H1 (cell line): ENCODE measurements at regions of chr9 and their contacts with region 1.

Region 1: DNA sequence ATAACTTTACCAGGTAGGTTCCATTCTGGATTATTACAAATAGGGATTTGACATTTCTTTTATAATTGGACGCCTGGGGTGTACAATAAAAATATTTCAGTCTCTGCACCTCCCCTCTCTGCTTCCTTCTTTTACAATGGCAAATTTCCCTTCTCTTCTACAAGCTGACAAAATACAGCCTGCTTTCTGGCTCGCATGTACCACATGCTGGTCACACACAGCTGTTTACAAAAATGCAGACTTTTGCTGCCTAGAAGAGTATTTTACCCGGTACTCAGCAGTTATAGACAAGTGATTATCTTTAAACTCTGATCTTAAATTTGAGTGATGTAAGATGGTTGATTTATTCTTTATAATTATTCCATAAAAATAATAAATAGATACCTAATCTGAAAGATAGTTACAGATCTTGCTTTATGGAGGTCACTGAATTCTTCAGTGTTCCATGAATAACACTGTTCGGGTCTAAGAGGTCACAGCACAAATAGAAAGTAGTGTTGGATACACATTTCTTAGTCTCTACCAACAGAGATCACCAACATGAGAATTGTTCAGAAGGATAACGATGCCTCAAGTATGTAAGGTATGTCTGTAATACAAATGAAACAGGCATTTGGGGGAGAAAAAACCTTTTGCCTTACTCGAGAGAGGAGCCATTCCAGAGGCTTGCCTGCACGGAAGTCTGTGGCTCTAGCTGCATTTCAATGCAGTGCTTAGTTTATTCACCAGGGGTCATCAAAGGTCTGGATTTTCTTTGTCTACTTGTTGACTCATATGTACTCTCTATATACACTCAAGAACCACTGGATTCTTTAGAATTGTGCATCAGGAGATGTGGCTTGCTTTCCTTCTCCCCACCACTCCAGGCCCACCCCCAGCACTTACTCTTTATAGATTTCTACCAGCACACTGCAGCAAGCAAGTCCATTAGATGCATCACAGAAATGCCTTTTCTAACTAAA is 206.6 kb upstream of the RFX3 start:
- DNase-seq: peak in 1 of 2 experiments; percentile 25
- H3K4me3 ChIP-seq: no peak overlapping the region
- H3K27ac ChIP-seq: no peak overlapping the region
- H3K4me1 ChIP-seq: no peaks in the 10 kb centered on the region
- H3K27me3 ChIP-seq: no peaks in the 10 kb centered on the region
- CTCF ChIP-seq: peak in 2 of 3 experiments; percentile 68 to 75; a peak in 3 of 4 replicates
- EP300 ChIP-seq: no peak
- POLR2A ChIP-seq: no peak
- RAD21 ChIP-seq: peak; percentile 87 to 92

Region 2: GRCh38 chr9:3788211-3788610 is 55.9 kb after region 1 on chr9:
- CTCF ChIA-PET with region 1: no interaction called
- POLR2A ChIA-PET with region 1: no interaction called
- DNase-seq: no peak
- H3K4me3 ChIP-seq: no peak overlapping the region
- H3K27ac ChIP-seq: no peak overlapping the region
- H3K4me1 ChIP-seq: no peaks in the 10 kb centered on the region
- H3K27me3 ChIP-seq: no peaks in the 10 kb centered on the region
- CTCF ChIP-seq: no peak
- EP300 ChIP-seq: no peak
- POLR2A ChIP-seq: no peak
- RAD21 ChIP-seq: no peak

Region 3: DNA sequence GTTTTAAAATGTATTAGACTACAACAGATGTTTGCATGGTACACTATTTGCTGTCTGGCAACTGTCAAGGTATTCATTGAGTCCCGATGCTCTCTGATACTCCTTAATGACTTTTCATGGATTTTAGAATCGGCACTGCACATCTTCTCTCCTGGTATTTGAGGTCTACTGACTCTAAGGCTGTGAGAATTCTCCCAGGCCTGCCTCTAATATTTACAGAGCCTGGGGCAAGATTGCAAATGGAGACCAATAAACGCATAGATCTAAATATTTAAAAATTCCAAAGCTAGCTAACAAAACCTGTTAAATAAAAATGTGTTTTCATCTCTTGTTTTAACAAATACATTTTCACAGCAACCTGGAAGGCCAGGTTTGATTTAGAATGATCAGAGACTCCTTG is 84.8 kb after region 1 on chr9:
- CTCF ChIA-PET with region 1: no interaction called
- POLR2A ChIA-PET with region 1: no interaction called
- DNase-seq: no peak
- H3K4me3 ChIP-seq: no peak overlapping the region
- H3K27ac ChIP-seq: no peak overlapping the region
- H3K4me1 ChIP-seq: no peaks in the 10 kb centered on the region
- H3K27me3 ChIP-seq: no peaks in the 10 kb centered on the region
- CTCF ChIP-seq: no peak
- EP300 ChIP-seq: no peak
- POLR2A ChIP-seq: no peak
- RAD21 ChIP-seq: no peak

Region 4: DNA sequence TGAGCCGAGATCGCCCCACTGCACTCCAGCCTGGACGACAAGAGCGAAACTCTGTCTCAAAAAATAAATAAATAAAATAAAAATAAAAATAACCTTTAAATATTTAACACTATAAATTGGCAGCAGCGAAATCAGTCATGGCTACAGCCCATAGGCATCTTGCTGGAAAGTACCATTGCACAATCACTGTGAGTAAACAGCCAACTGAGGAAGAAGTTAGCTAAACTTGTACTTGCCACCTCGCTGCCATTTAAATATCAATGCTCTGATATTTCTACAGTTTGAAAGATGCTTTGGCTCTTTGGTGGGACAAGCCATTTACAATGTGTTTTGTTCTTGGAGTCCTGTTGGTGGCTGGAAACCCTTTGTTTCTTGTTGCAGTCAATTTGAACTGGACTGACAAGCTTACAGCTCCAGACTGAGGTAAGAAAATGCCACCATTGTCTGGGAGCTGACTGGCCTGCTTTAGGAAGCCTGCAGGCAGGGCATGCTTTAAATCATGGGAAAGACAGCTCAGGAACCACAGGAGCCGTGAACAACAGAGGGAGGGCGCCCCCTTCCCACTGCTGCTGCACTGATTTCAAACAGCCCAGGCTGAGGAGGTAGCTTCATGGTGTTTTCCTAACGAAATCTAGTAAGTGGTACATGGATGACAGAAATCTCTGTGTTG is 116.2 kb after region 1 on chr9:
- CTCF ChIA-PET with region 1: interaction called, 22 read pairs
- POLR2A ChIA-PET with region 1: no interaction called
- DNase-seq: peak; percentile 47 to 78
- H3K4me3 ChIP-seq: no peak overlapping the region
- H3K27ac ChIP-seq: no peak overlapping the region
- H3K4me1 ChIP-seq: peaks cover 0 to 5% (median 2%) of the 10 kb centered on the region in 4 experiments; a peak in 4 of 7 replicates
- H3K27me3 ChIP-seq: no peaks in the 10 kb centered on the region
- CTCF ChIP-seq: peak; percentile 63 to 77 (median 72)
- EP300 ChIP-seq: no peak
- POLR2A ChIP-seq: no peak
- RAD21 ChIP-seq: peak; percentile 70 to 81

Region 5: GRCh38 chr9:3936520-3937235 is 204.3 kb after region 1 on chr9:
- CTCF ChIA-PET with region 1: no interaction called
- POLR2A ChIA-PET with region 1: no interaction called
- DNase-seq: no peak
- H3K4me3 ChIP-seq: no peak overlapping the region
- H3K27ac ChIP-seq: no peak overlapping the region
- H3K4me1 ChIP-seq: peaks cover 0 to 3% (median 0%) of the 10 kb centered on the region in 4 experiments; a peak in 2 of 7 replicates
- H3K27me3 ChIP-seq: no peaks in the 10 kb centered on the region
- CTCF ChIP-seq: no peak
- EP300 ChIP-seq: no peak
- POLR2A ChIP-seq: no peak
- RAD21 ChIP-seq: no peak

Region 6: GRCh38 chr9:4066120-4066519 is 333.8 kb after region 1 on chr9:
- CTCF ChIA-PET with region 1: interaction called, 11 read pairs
- POLR2A ChIA-PET with region 1: no interaction called
- DNase-seq: no peak
- H3K4me3 ChIP-seq: no peak overlapping the region
- H3K27ac ChIP-seq: no peak overlapping the region
- H3K4me1 ChIP-seq: no peaks in the 10 kb centered on the region; a peak in 1 of 7 replicates
- H3K27me3 ChIP-seq: no peaks in the 10 kb centered on the region
- CTCF ChIP-seq: no peak
- EP300 ChIP-seq: no peak
- POLR2A ChIP-seq: no peak
- RAD21 ChIP-seq: no peak

Region 7: GRCh38 chr9:4117835-4118610 is 385.7 kb after region 1 on chr9:
- CTCF ChIA-PET with region 1: interaction called, 11 read pairs
- POLR2A ChIA-PET with region 1: no interaction called
- DNase-seq: peak; percentile 36 to 89
- H3K4me3 ChIP-seq: no peak overlapping the region
- H3K27ac ChIP-seq: no peak overlapping the region
- H3K4me1 ChIP-seq: no peaks in the 10 kb centered on the region
- H3K27me3 ChIP-seq: no peaks in the 10 kb centered on the region
- CTCF ChIP-seq: peak; percentile 63 to 82 (median 82)
- EP300 ChIP-seq: no peak
- POLR2A ChIP-seq: no peak
- RAD21 ChIP-seq: peak; percentile 76 to 82

Region 8: GRCh38 chr9:4197548-4197947 is 465.2 kb after region 1 on chr9:
- CTCF ChIA-PET with region 1: interaction called, 10 read pairs
- POLR2A ChIA-PET with region 1: no interaction called
- DNase-seq: peak in 1 of 2 experiments; percentile 49
- H3K4me3 ChIP-seq: no peak overlapping the region
- H3K27ac ChIP-seq: no peak overlapping the region
- H3K4me1 ChIP-seq: no peaks in the 10 kb centered on the region
- H3K27me3 ChIP-seq: no peaks in the 10 kb centered on the region
- CTCF ChIP-seq: peak; percentile 71 to 87 (median 77)
- EP300 ChIP-seq: no peak
- POLR2A ChIP-seq: no peak
- RAD21 ChIP-seq: peak; percentile 75 to 79